Lower leg skin (tissue), 4 donors: ENCODE measurements at regions of chr19 and their contacts with region 1.

Region 1: GRCh38 chr19:15177269-15178116 is 23.3 kb downstream of the NOTCH3 start:
- DNase-seq: peak; percentile 53 to 95
- H3K4me3 ChIP-seq: no peak overlapping the region
- CTCF ChIP-seq: peak in 1 of 3 donors; percentile 77
- POLR2A ChIP-seq: no peak

Region 2: DNA sequence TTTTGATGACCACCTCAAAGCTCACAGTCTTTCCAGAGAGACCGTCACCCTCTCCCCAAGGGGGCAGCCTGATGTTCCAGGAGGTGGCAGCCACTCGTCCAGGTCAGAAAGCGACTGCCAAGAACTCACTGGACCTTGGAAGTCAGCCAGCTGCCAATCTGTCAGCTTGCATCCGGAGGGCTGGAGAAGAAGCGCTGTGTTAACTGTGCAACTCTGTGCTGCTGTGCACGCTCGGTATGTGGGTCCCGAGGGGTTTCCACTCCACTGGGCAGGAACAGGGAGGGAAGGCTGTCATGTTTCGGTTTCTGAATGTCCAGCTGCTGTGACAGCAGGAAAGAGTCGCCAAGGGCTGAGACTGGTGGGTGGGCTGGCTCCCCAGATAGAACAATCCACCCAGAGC is 1760.4 kb before region 1 on chr19:
- intact Hi-C with region 1: no loop called
- DNase-seq: no peak
- H3K4me3 ChIP-seq: no peak overlapping the region
- CTCF ChIP-seq: no peak
- POLR2A ChIP-seq: no peak

Region 3: DNA sequence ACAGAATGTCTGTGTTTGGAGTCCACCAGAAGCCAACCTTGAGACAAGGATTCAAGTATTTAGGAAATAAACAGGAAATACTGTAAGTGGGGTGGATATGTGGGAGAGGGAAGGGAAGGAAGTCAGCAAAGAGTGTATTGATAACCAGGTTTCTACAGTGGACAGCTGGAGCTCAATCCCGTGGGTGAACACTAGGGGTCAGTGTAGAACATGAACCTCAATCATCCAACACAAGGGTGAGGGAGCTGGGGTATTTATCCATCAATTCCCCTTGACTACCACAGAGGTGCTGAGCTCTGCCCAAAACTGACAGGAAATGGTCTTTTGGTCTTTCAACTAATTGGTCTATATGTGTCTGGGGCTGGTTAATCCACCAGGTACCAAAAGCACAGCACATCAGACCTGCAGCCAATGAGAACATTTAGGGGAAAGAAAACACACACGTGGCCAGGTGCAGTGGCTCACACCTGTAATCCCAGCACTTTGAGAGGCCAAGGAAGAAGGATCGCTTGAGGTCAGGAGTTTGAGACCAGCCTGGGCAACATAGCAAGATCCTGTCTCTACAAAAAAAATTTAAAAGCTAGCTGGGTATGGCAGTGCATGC is 75.9 kb before region 1 on chr19:
- intact Hi-C with region 1: no loop called
- DNase-seq: no peak
- H3K4me3 ChIP-seq: no peak overlapping the region
- CTCF ChIP-seq: no peak
- POLR2A ChIP-seq: no peak

Region 4: DNA sequence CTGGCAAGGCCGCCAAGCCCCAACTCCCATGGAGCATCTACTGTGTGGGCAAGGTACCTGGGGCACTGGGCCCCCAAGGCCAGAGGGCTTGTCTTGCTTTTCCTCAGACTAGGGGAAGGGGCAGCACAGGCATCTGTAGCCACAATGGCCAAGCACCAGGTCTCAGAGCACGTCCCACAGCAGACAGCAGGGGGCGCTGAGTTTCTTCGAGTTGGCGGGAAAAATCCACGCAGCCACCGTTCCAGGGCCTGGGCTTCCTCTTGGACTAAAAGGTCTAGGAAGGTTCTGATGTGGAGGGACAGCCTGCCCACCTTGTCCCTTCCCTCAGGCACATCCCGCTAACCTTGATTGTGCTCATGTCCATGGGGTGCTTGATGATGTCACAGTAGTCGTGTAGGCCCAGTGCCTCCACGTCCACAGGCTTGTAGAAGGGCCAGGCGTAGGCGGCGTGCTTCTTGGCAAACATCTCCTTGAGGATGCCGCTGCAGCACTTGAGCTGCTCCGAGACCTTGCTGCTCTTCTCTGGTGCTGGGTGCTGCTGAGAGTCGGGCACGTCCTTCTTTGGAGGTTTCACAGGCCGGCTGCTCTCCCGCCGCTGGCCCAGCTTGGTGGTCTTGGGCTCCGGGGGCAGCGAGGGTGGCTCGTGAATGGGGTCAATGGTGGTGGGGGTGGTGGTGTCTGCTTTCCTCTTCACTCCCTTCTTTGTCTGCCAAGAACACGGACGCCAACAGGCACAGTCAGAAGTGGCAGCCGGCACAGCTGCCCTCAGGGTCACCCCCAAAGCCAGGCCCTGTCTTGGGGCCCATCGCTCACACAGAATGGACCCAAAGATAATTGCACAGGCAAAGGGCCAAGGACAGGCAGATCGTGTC is 86.8 kb after region 1 on chr19:
- intact Hi-C with region 1: loop called (anchors 5 kb)
- DNase-seq: peak; percentile 53 to 93
- H3K4me3 ChIP-seq: no peak overlapping the region
- CTCF ChIP-seq: peak in 1 of 3 donors; percentile 71
- POLR2A ChIP-seq: no peak